ENCODE measurements at regions of chr11 and their contacts with region 1.

Region 1: GRCh38 chr11:129785383-129786111 is 30.1 kb upstream of the TMEM45B start:
- DNase-seq: peak; percentile 55
- H3K4me3 Mint-ChIP-seq: no peak overlapping the region
- H3K27ac Mint-ChIP-seq: no peak overlapping the region
- H3K4me1 Mint-ChIP-seq: peaks cover 8% of the 10 kb centered on the region
- H3K27me3 Mint-ChIP-seq: no peaks in the 10 kb centered on the region
- CTCF ChIP-seq: peak; percentile 62

Region 2: DNA sequence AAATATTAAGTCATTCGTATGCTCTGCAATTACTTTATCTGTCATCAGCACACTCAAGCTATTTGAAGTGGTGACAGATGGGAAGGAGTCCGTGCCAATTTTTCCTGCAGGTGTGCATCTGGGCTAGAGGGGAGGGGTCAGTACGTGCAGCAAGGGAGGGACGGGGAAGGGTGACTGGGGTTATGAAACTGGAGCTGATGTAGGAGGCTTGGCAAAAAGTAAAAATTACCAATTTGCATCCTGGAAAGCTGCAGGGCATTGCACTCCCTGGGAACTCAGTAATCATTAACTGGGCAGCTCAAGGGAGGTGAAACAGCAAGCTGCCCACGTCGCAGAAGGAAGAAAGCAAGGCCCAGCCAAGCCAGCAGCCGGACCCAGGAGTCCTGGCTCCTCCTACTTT is 57.0 kb before region 1 on chr11:
- CTCF ChIA-PET with region 1: no interaction called
- POLR2A ChIA-PET with region 1: no interaction called
- intact Hi-C with region 1: no loop called
- DNase-seq: peak; percentile 55
- H3K4me3 Mint-ChIP-seq: no peak overlapping the region
- H3K27ac Mint-ChIP-seq: no peak overlapping the region
- H3K4me1 Mint-ChIP-seq: peaks cover 54% of the 10 kb centered on the region
- H3K27me3 Mint-ChIP-seq: peaks cover 5% of the 10 kb centered on the region
- CTCF ChIP-seq: no peak

Region 3: GRCh38 chr11:129798212-129798611 is 12.7 kb after region 1 on chr11:
- CTCF ChIA-PET with region 1: interaction called, 25 read pairs
- POLR2A ChIA-PET with region 1: no interaction called
- intact Hi-C with region 1: no loop called
- DNase-seq: no peak
- H3K4me3 Mint-ChIP-seq: no peak overlapping the region
- H3K27ac Mint-ChIP-seq: no peak overlapping the region
- H3K4me1 Mint-ChIP-seq: peaks cover 2% of the 10 kb centered on the region
- H3K27me3 Mint-ChIP-seq: no peaks in the 10 kb centered on the region
- CTCF ChIP-seq: no peak

Region 4: DNA sequence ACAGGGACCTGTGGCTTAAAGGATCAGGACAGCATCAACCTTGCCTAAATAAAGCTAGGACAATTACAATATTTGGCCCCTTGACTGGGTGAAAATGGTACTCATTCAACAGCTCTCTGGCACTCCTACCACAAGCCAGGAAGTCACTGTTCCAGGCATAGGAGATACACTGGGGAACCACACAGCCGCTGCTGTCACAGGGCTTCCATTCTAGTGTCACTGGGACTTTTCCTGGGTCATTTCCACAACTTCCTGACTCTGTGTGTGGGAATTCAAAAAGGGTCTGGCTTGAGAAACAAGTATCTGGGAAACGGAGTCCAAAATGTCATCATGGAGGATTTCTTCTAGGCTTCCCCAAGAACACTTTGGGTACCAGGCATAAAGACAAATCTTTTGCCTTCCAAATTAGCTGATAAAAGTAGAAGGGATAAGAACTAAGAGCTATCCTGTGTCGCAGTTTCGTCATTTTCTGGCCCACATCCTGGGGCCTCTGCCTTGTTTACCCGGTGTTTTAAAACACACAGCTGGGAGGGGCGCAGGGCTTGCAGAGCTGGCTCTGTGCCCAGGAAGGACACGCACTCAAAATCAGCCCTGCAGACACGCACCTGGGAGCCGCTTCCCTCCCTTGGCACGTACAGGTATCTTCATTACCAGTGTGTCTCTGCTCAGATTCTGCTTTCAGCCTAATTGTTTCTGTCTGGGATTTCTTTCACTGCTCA is 68.1 kb after region 1 on chr11:
- CTCF ChIA-PET with region 1: interaction called, 17 read pairs
- POLR2A ChIA-PET with region 1: interaction called, 31 read pairs
- intact Hi-C with region 1: loop called (anchors 5 kb)
- DNase-seq: peak; percentile 91
- H3K4me3 Mint-ChIP-seq: peak overlapping the region; percentile 2
- H3K27ac Mint-ChIP-seq: peak overlapping the region; percentile 80
- H3K4me1 Mint-ChIP-seq: peaks cover 37% of the 10 kb centered on the region
- H3K27me3 Mint-ChIP-seq: no peaks in the 10 kb centered on the region
- CTCF ChIP-seq: no peak

Region 5: DNA sequence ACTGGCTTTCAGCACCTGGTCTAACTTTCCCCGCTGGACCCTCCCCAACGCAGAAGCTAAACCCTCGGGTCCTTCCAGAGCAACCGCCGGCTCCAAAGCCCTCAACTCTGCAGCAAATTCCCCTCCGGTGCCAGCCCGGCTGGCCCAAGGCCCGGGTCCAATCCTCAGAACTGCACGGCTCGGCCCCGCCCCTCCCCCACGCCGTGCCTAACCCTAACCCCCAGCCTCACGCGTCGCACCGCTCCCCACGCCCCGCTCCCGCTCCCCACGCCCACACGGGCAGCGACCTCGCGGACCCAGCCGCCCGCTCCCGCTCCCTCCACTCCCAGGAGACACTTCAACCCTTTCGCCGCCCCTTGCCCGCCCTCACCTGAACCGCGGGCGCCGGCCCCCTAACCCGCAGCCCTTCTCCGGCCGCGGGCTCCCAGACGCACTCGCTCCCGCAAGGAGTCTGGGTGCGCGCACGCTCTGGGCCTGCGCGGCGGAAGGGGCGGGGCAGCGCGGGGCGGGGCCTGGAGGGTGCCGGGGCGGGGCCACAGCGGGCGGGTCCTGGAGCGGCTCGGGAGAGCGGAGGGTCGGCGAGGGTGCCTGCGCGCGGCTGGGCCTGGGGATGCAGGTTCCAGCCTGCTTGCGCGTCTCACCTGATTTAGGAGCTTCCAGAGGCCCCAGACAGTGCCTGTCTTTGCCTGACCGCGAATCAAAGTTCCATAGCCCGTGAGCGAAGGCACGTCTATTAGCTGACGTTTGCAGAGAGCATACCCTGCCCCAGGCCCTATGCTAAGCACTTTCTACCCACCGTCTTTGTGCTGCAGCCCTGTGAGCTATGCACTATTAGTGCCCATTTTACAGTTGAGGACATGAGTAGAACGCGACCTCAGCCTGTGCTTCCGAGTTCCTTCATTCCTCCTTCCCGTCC is 109.8 kb after region 1 on chr11 and contains the start of gene NFRKB:
- CTCF ChIA-PET with region 1: interaction called, 18 read pairs
- POLR2A ChIA-PET with region 1: interaction called, 25 read pairs
- intact Hi-C with region 1: loop called (anchors 1 kb)
- DNase-seq: peak; percentile 80
- H3K4me3 Mint-ChIP-seq: peak within 1 kb of the TSS; percentile 81
- H3K27ac Mint-ChIP-seq: peak within 1 kb of the TSS; percentile 70
- H3K4me1 Mint-ChIP-seq: peaks cover 10% of the 10 kb centered on the region
- H3K27me3 Mint-ChIP-seq: no peaks in the 10 kb centered on the region
- CTCF ChIP-seq: no peak
- total RNA-seq, gene NFRKB: 34.0 and 37.4 TPM in 2 replicates

Region 6: GRCh38 chr11:130124096-130124495 is 338.5 kb after region 1 on chr11:
- CTCF ChIA-PET with region 1: interaction called, 7 read pairs
- POLR2A ChIA-PET with region 1: no interaction called
- intact Hi-C with region 1: loop called (anchors 2 kb)
- DNase-seq: peak; percentile 95
- H3K4me3 Mint-ChIP-seq: peak overlapping the region; percentile 30
- H3K27ac Mint-ChIP-seq: peak overlapping the region; percentile 49
- H3K4me1 Mint-ChIP-seq: peaks cover 25% of the 10 kb centered on the region
- H3K27me3 Mint-ChIP-seq: no peaks in the 10 kb centered on the region
- CTCF ChIP-seq: no peak

Region 7: GRCh38 chr11:130213143-130213978 is 427.8 kb after region 1 on chr11:
- CTCF ChIA-PET with region 1: interaction called, 5 read pairs
- POLR2A ChIA-PET with region 1: no interaction called
- intact Hi-C with region 1: loop called (anchors 2 kb)
- DNase-seq: peak; percentile 55
- H3K4me3 Mint-ChIP-seq: no peak overlapping the region
- H3K27ac Mint-ChIP-seq: no peak overlapping the region
- H3K4me1 Mint-ChIP-seq: no peaks in the 10 kb centered on the region
- H3K27me3 Mint-ChIP-seq: no peaks in the 10 kb centered on the region
- CTCF ChIP-seq: peak; percentile 96